AG04449 (cell line): ENCODE measurements at regions of chr21 and their contacts with region 1.

Region 1: GRCh38 chr21:34091607-34092006 is 18.2 kb downstream of the MRPS6 start:
- DNase-seq: no peak
- H3K4me3 ChIP-seq: no peak overlapping the region
- CTCF ChIP-seq: peak; percentile 17

Region 2: DNA sequence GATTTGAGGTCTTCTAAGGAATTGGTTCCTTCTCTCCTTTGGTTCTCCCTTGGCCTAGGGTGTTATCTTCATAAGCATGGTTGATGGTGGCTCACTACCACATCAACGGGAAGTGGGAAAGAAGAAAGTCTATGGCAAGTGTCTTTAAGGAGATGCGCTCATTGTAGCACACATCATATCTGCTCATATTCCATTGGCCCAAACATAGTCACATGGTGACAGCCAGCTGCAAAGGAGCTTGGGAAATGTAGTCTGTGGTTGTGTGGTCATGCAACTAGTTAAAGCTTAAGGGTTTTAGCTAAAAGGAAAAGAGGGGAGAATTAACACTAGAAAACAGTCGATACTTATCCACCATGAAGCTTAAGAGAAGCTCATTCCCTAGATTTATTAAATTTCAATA is 29.6 kb before region 1 on chr21:
- CTCF ChIA-PET with region 1: no interaction called
- POLR2A ChIA-PET with region 1: no interaction called
- DNase-seq: no peak
- H3K4me3 ChIP-seq: no peak overlapping the region
- CTCF ChIP-seq: no peak

Region 3: DNA sequence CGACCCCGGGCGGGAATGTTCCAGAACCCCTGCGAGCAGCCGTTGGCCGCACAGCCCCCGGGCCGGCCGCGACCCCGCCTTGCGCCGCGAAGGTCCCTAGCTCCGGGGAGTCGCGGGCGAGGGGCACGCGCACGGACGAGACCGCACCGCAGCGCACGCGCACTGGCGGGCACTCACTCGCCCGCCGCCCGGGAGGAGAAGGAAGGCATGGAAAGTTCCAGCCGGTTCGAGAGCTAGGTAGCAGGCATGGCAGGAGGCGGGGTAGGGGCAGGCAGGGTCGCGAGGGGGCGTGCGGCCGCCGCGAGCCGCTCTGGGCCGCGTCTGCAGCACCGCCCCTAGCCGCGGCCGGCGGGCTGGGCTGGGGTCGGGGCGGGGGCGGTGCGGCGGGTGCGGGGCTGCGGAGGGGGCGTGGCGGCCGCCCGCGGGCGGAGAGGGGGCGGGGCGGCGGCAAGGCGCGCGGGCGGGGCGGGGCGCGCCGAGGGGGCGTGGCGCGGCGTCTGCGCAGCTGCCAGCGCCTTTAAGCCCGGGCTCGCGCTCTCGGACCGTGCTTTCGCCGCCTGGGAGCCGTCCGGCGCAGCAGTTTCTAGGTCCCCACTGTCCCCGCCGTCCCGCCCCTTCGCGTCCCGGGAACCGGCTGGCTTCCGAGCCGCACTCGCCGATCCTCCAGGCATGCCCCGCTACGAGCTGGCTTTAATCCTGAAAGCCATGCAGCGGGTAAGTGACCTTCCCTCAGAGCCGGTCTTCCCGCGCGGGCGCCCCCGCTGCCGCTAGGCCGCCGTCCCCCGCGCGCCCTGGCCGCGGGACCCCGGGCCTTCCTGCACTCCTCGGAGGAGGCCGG is 18.4 kb before region 1 on chr21 and contains the starts of genes MRPS6 and SLC5A3:
- CTCF ChIA-PET with region 1: interaction called, 14 read pairs
- POLR2A ChIA-PET with region 1: no interaction called
- DNase-seq: no peak
- H3K4me3 ChIP-seq: peak within 1 kb of the TSS; percentile 85
- CTCF ChIP-seq: no peak

Region 4: DNA sequence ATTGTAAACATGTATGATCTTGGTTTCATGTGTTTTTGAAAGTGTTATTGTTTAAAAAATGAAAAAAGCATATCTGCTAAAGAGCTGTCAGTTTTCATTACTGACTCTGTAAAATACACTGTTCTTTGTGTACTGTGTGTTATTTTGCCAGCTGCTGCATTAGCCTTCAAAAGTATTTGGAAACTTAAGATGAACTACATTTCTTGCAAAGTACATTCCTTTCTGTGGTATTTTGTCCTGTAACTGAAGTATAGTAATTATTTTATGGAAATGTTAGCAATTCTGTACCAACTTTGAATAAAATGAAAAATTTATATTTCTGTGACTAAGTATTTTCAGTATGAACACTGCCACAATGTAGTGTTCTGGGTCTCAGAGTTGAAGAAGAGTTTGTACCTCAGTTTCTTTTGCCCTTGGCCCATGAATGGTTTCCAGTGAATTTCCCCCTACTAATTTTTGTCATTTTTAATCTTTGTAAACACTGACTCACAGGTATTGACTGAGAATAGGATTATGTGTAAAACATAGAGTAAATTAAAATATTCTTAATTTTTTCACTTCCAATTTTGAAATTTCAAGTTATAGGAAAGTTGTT is 14.4 kb after region 1 on chr21:
- CTCF ChIA-PET with region 1: interaction called, 36 read pairs
- POLR2A ChIA-PET with region 1: interaction called, 4 read pairs
- DNase-seq: no peak
- H3K4me3 ChIP-seq: no peak overlapping the region
- CTCF ChIP-seq: no peak